K562 (cell line): ENCODE measurements at regions of chr10 and their contacts with region 1.

Region 1: GRCh38 chr10:119207367-119207668 is at the start of gene GRK5:
- DNase-seq: peak; percentile 89 to 93 (median 92)
- ATAC-seq: peak; percentile 97
- H3K4me3 ChIP-seq: peak within 1 kb of the TSS; percentile 71
- H3K27ac ChIP-seq: peak within 1 kb of the TSS; percentile 80
- H3K4me1 ChIP-seq: peaks cover 8 to 21% of the 10 kb centered on the region in 2 experiments
- H3K27me3 ChIP-seq: no peaks in the 10 kb centered on the region
- CTCF ChIP-seq: no peak
- EP300 ChIP-seq: no peak
- POLR2A ChIP-seq: no peak
- RAD21 ChIP-seq: no peak
- polyA plus RNA-seq, gene GRK5: not detected

Region 2: GRCh38 chr10:119006451-119007210 is 200.7 kb before region 1 on chr10:
- CTCF ChIA-PET with region 1: no interaction called
- POLR2A ChIA-PET with region 1: no interaction called
- in situ Hi-C with region 1: no loop called
- intact Hi-C with region 1: no loop called
- DNase-seq: peak in 1 of 4 experiments; percentile 35
- ATAC-seq: peak; percentile 49; the same call in 2 of the 3 replicates
- H3K4me3 ChIP-seq: no peak overlapping the region
- H3K27ac ChIP-seq: no peak overlapping the region
- H3K4me1 ChIP-seq: no peaks in the 10 kb centered on the region
- H3K27me3 ChIP-seq: peaks cover 5 to 36% of the 10 kb centered on the region in 2 experiments; a peak in 2 of 5 replicates
- CTCF ChIP-seq: no peak
- EP300 ChIP-seq: peak; percentile 17; the same call in 1 of the 2 replicates
- POLR2A ChIP-seq: no peak
- RAD21 ChIP-seq: no peak

Region 3: GRCh38 chr10:119263951-119264621 is 56.8 kb after region 1 on chr10:
- CTCF ChIA-PET with region 1: no interaction called
- POLR2A ChIA-PET with region 1: no interaction called
- in situ Hi-C with region 1: no loop called
- intact Hi-C with region 1: no loop called
- DNase-seq: no peak
- ATAC-seq: no peak
- H3K4me3 ChIP-seq: no peak overlapping the region
- H3K27ac ChIP-seq: no peak overlapping the region
- H3K4me1 ChIP-seq: peaks cover 4 to 5% of the 10 kb centered on the region in 2 experiments; a peak in 3 of 5 replicates
- H3K27me3 ChIP-seq: no peaks in the 10 kb centered on the region
- CTCF ChIP-seq: no peak
- EP300 ChIP-seq: no peak
- POLR2A ChIP-seq: no peak
- RAD21 ChIP-seq: no peak

Region 4: DNA sequence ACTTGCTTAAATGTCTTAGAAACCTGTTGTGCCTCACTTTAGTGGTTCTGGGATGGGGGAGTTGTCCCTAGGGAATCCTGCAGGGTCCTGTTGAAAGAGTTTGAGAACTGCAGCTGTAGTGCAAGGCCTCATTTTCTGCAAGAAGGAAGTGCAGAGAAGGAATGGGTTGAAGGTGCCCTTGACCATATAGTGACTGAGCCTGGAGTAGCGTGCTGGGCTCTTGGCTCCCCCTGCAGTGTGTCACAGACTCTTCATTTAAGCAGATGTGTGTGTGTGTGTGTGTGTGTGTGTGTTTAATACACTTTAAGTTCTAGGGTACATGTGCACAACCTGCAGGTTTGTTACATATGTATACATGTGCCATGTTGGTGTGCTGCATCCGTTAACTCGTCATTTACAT is 92.2 kb after region 1 on chr10:
- CTCF ChIA-PET with region 1: interaction called, 3 read pairs
- POLR2A ChIA-PET with region 1: no interaction called
- in situ Hi-C with region 1: no loop called
- intact Hi-C with region 1: loop called (anchors 2 kb)
- DNase-seq: peak in 1 of 4 experiments; percentile 33
- ATAC-seq: peak; percentile 85
- H3K4me3 ChIP-seq: no peak overlapping the region
- H3K27ac ChIP-seq: no peak overlapping the region
- H3K4me1 ChIP-seq: no peaks in the 10 kb centered on the region; a peak in 2 of 5 replicates
- H3K27me3 ChIP-seq: no peaks in the 10 kb centered on the region
- CTCF ChIP-seq: peak; percentile 26 to 50 (median 38); a peak in 3 of 6 replicates
- EP300 ChIP-seq: no peak
- POLR2A ChIP-seq: no peak
- RAD21 ChIP-seq: peak; percentile 49 to 72

Region 5: DNA sequence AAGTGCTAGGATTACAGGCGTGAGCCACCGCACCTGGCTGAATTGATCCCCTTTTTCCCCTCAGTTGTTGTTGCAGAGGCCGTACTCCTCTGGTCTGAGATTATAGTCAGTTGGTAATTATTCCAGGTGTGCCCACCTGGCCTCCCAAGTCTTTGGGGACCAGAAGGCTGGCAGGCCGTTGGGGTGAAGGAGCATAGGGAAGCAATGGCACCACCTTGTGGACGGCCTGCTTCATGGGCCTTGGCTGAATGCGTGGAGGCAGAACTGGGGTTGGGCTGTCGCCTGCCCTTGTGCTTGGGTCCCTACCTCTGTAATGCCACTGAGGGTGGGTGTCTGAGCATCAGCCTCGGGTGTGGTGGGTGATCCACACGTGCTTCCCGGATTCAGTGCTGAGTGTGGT is 209.5 kb after region 1 on chr10:
- CTCF ChIA-PET with region 1: interaction called, 5 read pairs
- POLR2A ChIA-PET with region 1: no interaction called
- in situ Hi-C with region 1: loop called (anchors 5 kb)
- intact Hi-C with region 1: loop called (anchors 2 kb)
- DNase-seq: peak; percentile 60 to 72 (median 66)
- ATAC-seq: peak; percentile 90
- H3K4me3 ChIP-seq: no peak overlapping the region
- H3K27ac ChIP-seq: no peak overlapping the region
- H3K4me1 ChIP-seq: peaks cover 0 to 4% of the 10 kb centered on the region in 2 experiments; a peak in 1 of 5 replicates
- H3K27me3 ChIP-seq: peaks cover 0 to 25% of the 10 kb centered on the region in 2 experiments; a peak in 3 of 5 replicates
- CTCF ChIP-seq: peak; percentile 72 to 77 (median 75)
- EP300 ChIP-seq: no peak
- POLR2A ChIP-seq: no peak
- RAD21 ChIP-seq: peak; percentile 66 to 87

Region 6: DNA sequence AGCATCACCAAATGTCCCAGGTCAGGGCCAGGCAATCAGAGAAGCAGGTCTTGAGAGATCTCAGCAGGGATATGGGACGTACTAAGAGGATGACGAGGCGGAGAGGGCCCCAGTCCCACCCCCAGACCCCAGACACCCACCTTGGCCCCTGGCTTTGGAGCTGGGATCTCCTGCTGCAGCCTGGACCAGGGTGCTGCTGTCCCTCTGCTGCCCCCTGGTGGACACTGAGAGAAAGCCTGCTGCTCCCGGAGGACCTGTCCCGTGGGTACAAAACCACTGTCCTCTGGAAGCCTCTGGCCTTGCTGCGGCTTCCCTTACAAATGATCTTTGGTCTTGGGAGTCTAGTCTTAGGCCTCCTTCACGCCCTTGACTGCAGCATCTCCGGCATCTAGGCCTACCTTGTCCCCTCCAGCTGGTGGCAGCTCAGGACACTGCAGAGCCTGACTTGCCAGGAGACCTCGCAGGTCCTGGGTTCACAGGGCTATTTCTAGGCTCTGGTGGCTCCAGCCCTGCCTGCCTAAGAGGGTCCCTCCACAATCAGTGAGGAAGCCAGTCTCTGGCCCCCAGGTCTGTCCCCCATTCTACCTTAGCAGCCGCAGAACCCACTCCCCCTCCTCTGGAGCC is 238.1 kb after region 1 on chr10:
- CTCF ChIA-PET with region 1: interaction called, 3 read pairs
- POLR2A ChIA-PET with region 1: interaction called, 6 read pairs
- in situ Hi-C with region 1: no loop called
- intact Hi-C with region 1: loop called (anchors 2 kb)
- DNase-seq: peak; percentile 76 to 83 (median 82)
- ATAC-seq: peak; percentile 92
- H3K4me3 ChIP-seq: no peak overlapping the region
- H3K27ac ChIP-seq: no peak overlapping the region
- H3K4me1 ChIP-seq: peaks cover 0 to 17% of the 10 kb centered on the region in 2 experiments; a peak in 2 of 5 replicates
- H3K27me3 ChIP-seq: peaks cover 0 to 59% of the 10 kb centered on the region in 2 experiments; a peak in 3 of 5 replicates
- CTCF ChIP-seq: peak; percentile 78 to 81 (median 78)
- EP300 ChIP-seq: no peak
- POLR2A ChIP-seq: no peak
- RAD21 ChIP-seq: peak; percentile 65 to 74